Naive thymus-derived CD8-positive, alpha-beta T cell (primary cell): ENCODE measurements at regions of chr1 and their contacts with region 1.

Region 1: GRCh38 chr1:89605692-89606091 is 27.2 kb upstream of the LRRC8C start:
- DNase-seq: no peak
- ATAC-seq: no peak
- H3K4me3 Mint-ChIP-seq: peak overlapping the region in 9 of 10 donors; percentile 1 to 91 (median 69)
- H3K27ac Mint-ChIP-seq: peak overlapping the region; percentile 94 to 100 (median 99)
- H3K4me1 Mint-ChIP-seq: peaks cover 38 to 96% (median 94%) of the 10 kb centered on the region in 4 donors
- H3K27me3 Mint-ChIP-seq: no peaks in the 10 kb centered on the region

Region 2: DNA sequence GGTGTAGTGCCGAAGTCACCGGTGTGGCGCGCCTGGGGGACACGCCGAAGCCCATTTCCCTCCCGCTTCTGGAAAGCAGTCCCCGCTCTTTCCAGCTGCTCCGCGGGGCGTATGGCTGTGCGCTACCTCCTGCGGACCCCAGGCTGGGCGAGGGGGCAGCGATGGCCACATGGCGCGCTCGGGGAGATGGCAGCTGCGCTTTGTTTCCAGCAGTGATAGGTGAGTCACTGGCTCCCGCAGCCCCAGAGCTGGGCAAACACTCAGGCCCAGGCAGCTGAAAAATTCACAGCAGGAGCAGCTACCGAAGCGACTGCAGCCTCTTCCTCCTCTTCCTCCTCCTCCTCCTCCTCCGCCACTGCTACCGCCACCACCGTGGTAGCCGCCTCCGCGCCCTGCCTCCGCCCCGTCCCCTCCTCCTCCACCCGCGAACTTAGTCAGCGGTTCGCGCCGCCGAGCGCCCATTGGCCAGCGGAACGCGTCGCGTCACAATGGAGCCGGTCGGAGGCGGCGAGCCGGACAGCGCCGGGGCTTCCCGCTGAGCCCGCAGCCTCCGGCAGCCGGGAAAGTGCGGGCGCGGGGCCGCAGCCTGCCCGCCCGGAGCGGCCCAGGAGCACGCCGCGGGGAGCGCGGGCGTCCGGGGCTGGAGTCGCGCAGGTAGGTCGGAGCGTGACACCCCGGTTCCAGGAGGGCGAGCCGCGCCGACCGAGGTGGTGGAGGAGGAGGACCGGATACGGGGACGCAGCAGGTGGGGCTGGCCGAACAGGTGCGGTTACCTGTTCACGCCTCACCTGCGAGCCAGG is 81.1 kb before region 1 on chr1 and contains the start of gene LRRC8B:
- POLR2A ChIA-PET with region 1: interaction called, 62 read pairs
- DNase-seq: peak; percentile 74 to 90 (median 85)
- ATAC-seq: peak; percentile 85 to 86
- H3K4me3 Mint-ChIP-seq: peak within 1 kb of the TSS in 5 of 10 donors; percentile 81 to 99 (median 92)
- H3K27ac Mint-ChIP-seq: peak within 1 kb of the TSS; percentile 88 to 96 (median 94)
- H3K4me1 Mint-ChIP-seq: peaks cover 7 to 19% (median 14%) of the 10 kb centered on the region in 4 donors
- H3K27me3 Mint-ChIP-seq: no peaks in the 10 kb centered on the region
- polyA plus RNA-seq, gene LRRC8B: 8.5 to 13.6 (median 12.2) TPM

Region 3: GRCh38 chr1:89581859-89582258 is 23.8 kb before region 1 on chr1:
- POLR2A ChIA-PET with region 1: interaction called, 17 read pairs
- DNase-seq: no peak
- ATAC-seq: no peak
- H3K4me3 Mint-ChIP-seq: no peak overlapping the region
- H3K27ac Mint-ChIP-seq: peak overlapping the region in 4 of 10 donors; percentile 7 to 58 (median 46)
- H3K4me1 Mint-ChIP-seq: peaks cover 3 to 16% (median 9%) of the 10 kb centered on the region in 4 donors
- H3K27me3 Mint-ChIP-seq: no peaks in the 10 kb centered on the region

Region 4: GRCh38 chr1:89622895-89623294 is 17.2 kb after region 1 on chr1:
- POLR2A ChIA-PET with region 1: interaction called, 329 read pairs
- DNase-seq: peak in 3 of 10 donors; percentile 18 to 46 (median 36)
- ATAC-seq: peak; percentile 70 to 74
- H3K4me3 Mint-ChIP-seq: peak overlapping the region in 1 of 10 donors; percentile 20
- H3K27ac Mint-ChIP-seq: peak overlapping the region in 5 of 10 donors; percentile 17 to 74 (median 47)
- H3K4me1 Mint-ChIP-seq: peaks cover 17 to 62% (median 55%) of the 10 kb centered on the region in 4 donors
- H3K27me3 Mint-ChIP-seq: no peaks in the 10 kb centered on the region